Activated CD4-positive, alpha-beta T cell treated with anti-CD3 and anti-CD28 coated beads for 36 hours (primary cell): ENCODE measurements at regions of chr2 and their contacts with region 1.

Region 1: GRCh38 chr2:55718165-55719008 is 24.7 kb upstream of the PNPT1 start:
- DNase-seq: peak; percentile 66
- ATAC-seq: peak; percentile 55
- H3K4me3 Mint-ChIP-seq: no peak overlapping the region
- H3K27ac Mint-ChIP-seq: no peak overlapping the region
- H3K4me1 Mint-ChIP-seq: no peaks in the 10 kb centered on the region
- H3K27me3 Mint-ChIP-seq: peaks cover 6% of the 10 kb centered on the region

Region 2: DNA sequence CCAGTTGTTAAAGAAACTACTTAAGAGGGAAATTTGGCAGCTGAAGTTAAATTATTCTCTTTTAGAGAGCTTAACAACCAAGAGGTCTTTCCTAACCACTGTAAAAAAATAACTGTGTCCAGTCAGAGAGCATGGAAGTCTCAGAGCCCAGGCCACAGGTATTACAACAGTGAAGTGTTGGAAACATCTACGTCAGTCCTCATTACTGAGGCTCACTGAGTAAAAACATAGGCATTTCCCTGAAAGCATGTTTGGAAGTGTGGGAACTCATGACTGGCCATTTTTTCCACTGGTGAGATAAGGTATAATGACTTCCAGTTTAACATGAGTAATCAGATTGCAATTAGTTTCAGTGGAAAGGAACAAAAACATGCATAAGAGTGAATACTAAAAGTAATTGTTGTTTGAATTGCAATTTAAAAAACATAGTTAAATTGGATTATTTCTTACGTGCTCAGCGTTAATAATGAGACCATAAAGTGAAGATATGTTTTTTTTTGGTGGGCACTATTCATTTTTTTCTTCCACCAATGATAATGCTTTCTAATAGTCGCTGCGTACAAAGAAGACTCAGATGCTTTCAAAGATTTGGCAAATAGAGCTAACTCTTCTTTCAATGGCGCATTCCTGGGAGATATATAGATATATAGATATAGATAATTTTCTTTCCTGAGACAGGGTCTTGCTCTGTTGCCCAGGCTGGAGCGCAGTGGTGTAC is 144.4 kb after region 1 on chr2:
- CTCF ChIA-PET with region 1: no interaction called
- POLR2A ChIA-PET with region 1: no interaction called
- intact Hi-C with region 1: no loop called
- DNase-seq: no peak
- ATAC-seq: no peak
- H3K4me3 Mint-ChIP-seq: no peak overlapping the region
- H3K27ac Mint-ChIP-seq: no peak overlapping the region
- H3K4me1 Mint-ChIP-seq: no peaks in the 10 kb centered on the region
- H3K27me3 Mint-ChIP-seq: no peaks in the 10 kb centered on the region

Region 3: GRCh38 chr2:55961318-55961911 is 243.0 kb after region 1 on chr2:
- CTCF ChIA-PET with region 1: interaction called, 7 read pairs
- POLR2A ChIA-PET with region 1: no interaction called
- intact Hi-C with region 1: loop called (anchors 1 to 2 kb)
- DNase-seq: no peak
- ATAC-seq: no peak
- H3K4me3 Mint-ChIP-seq: no peak overlapping the region
- H3K27ac Mint-ChIP-seq: no peak overlapping the region
- H3K4me1 Mint-ChIP-seq: no peaks in the 10 kb centered on the region
- H3K27me3 Mint-ChIP-seq: peaks cover 15% of the 10 kb centered on the region

Region 4: DNA sequence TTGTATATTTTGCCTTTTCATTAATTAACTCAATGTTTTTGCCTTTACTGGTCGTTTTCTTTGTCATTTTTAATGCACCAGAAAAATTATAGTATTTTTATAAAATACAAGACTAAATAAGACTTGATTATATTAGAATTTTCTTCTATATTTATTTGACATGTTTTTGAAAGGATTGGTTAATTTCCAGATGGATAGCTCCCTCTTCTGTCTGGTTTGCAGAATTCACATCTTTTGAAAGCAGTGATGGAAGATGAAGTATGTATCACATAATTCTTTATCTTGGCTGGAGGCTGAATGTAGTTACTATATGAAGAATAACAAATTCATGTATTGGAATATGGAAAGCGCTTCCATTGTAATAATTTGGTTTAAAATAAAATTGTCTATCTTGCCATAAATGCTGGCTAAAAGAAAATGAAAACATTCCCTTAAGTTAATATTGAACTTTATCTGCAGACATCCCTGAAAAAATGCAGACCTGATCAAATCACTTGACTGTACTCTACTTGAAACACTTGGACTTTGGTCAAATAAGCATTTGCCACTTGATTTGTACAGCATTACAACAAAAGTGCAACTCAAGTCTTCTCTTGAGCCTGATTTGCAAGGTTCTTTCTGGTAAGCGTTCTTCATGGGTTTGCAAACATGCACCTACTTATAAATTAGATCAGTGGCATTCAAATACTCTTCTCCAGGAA is 291.5 kb after region 1 on chr2:
- CTCF ChIA-PET with region 1: interaction called, 3 read pairs
- POLR2A ChIA-PET with region 1: no interaction called
- intact Hi-C with region 1: loop called in 1 of 2 experiments (anchors 1 kb)
- DNase-seq: no peak
- ATAC-seq: no peak
- H3K4me3 Mint-ChIP-seq: no peak overlapping the region
- H3K27ac Mint-ChIP-seq: no peak overlapping the region
- H3K4me1 Mint-ChIP-seq: no peaks in the 10 kb centered on the region
- H3K27me3 Mint-ChIP-seq: no peaks in the 10 kb centered on the region

Region 5: DNA sequence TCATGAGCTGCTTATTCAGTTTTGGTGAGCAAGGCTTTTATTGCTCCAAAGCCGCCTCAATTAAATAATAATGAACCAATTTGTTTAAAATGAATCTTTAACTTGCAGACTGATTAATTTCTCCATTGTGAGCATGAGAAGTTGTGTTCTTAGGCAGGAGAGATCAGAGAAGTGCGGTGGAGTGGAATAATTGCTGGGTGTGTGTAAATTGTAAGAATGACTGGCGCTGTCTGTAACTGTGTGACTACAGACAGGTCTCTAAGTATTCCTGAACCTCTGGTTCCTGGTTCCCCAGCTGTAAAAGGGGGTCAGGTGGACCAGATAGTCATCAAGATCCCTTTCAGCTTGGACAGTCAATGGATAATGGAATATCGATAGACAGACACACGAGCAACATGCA is 303.2 kb after region 1 on chr2:
- CTCF ChIA-PET with region 1: no interaction called
- POLR2A ChIA-PET with region 1: no interaction called
- intact Hi-C with region 1: no loop called
- DNase-seq: no peak
- ATAC-seq: no peak
- H3K4me3 Mint-ChIP-seq: no peak overlapping the region
- H3K27ac Mint-ChIP-seq: no peak overlapping the region
- H3K4me1 Mint-ChIP-seq: no peaks in the 10 kb centered on the region
- H3K27me3 Mint-ChIP-seq: no peaks in the 10 kb centered on the region

Region 6: DNA sequence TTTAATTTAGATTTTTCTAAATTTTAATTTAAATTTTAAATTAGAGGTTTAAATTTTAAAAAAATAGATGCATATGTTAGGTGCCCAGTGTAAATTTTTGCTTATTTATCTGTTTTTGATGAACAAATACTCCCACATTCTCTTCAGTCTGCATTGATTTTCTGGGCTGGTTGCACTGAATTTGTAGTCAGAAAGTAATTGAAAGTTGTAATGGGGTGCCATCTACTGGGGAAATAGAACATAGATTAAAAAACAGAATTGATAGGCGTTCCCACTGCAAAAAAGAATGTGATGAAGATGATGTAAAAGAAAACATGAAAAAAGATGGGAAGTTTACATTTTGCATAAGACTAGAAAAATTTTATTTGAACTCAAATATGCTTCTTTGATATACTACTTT is 413.8 kb after region 1 on chr2:
- CTCF ChIA-PET with region 1: interaction called, 3 read pairs
- POLR2A ChIA-PET with region 1: no interaction called
- intact Hi-C with region 1: loop called (anchors 1 to 2 kb)
- DNase-seq: no peak
- ATAC-seq: no peak
- H3K4me3 Mint-ChIP-seq: no peak overlapping the region
- H3K27ac Mint-ChIP-seq: no peak overlapping the region
- H3K4me1 Mint-ChIP-seq: no peaks in the 10 kb centered on the region
- H3K27me3 Mint-ChIP-seq: peaks cover 4% of the 10 kb centered on the region

Region 7: GRCh38 chr2:56749152-56749752 is 1030.9 kb after region 1 on chr2:
- CTCF ChIA-PET with region 1: no interaction called
- POLR2A ChIA-PET with region 1: no interaction called
- intact Hi-C with region 1: loop called in 1 of 2 experiments (anchors 10 kb)
- DNase-seq: no peak
- ATAC-seq: no peak
- H3K4me3 Mint-ChIP-seq: no peak overlapping the region
- H3K27ac Mint-ChIP-seq: no peak overlapping the region
- H3K4me1 Mint-ChIP-seq: no peaks in the 10 kb centered on the region
- H3K27me3 Mint-ChIP-seq: no peaks in the 10 kb centered on the region

Region 8: DNA sequence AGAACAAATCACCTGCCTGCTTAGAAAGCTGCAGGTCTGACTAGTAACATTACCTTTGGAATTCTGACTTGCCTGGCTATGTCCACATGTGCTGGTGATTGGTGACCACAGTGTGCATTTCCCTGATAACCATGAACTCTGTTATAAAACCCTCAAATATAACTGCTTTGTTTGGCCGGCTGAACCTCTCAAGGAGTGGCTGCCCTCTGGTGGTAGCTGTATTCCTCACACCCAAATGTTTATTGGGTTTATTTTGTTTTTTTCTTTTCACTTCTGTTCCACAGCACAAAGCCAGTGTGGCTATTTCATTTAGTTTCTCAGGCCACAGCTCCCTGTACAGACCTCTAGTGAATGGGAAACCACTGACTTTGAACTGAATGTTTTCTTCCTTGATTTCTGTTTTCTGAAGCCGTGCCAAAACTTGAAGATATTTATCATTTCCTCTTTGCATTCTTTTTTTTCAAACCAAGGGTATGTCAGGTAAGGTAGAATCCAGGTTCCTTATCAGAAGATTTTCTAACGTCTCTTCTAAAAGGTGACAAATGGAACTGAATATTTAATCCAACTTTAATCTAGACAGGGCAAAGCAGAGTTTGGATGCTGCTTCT is 1779.2 kb after region 1 on chr2:
- CTCF ChIA-PET with region 1: no interaction called
- POLR2A ChIA-PET with region 1: no interaction called
- intact Hi-C with region 1: loop called in 1 of 2 experiments (anchors 5 kb)
- DNase-seq: peak; percentile 55
- ATAC-seq: peak; percentile 26
- H3K4me3 Mint-ChIP-seq: no peak overlapping the region
- H3K27ac Mint-ChIP-seq: no peak overlapping the region
- H3K4me1 Mint-ChIP-seq: no peaks in the 10 kb centered on the region
- H3K27me3 Mint-ChIP-seq: no peaks in the 10 kb centered on the region

Region 9: GRCh38 chr2:57516698-57517340 is 1798.4 kb after region 1 on chr2:
- CTCF ChIA-PET with region 1: no interaction called
- POLR2A ChIA-PET with region 1: no interaction called
- intact Hi-C with region 1: loop called (anchors 5 to 10 kb)
- DNase-seq: no peak
- ATAC-seq: no peak
- H3K4me3 Mint-ChIP-seq: no peak overlapping the region
- H3K27ac Mint-ChIP-seq: no peak overlapping the region
- H3K4me1 Mint-ChIP-seq: no peaks in the 10 kb centered on the region
- H3K27me3 Mint-ChIP-seq: no peaks in the 10 kb centered on the region